Left cardiac atrium (tissue), 4 donors: ENCODE measurements at regions of chr1 and their contacts with region 1.

Region 1: DNA sequence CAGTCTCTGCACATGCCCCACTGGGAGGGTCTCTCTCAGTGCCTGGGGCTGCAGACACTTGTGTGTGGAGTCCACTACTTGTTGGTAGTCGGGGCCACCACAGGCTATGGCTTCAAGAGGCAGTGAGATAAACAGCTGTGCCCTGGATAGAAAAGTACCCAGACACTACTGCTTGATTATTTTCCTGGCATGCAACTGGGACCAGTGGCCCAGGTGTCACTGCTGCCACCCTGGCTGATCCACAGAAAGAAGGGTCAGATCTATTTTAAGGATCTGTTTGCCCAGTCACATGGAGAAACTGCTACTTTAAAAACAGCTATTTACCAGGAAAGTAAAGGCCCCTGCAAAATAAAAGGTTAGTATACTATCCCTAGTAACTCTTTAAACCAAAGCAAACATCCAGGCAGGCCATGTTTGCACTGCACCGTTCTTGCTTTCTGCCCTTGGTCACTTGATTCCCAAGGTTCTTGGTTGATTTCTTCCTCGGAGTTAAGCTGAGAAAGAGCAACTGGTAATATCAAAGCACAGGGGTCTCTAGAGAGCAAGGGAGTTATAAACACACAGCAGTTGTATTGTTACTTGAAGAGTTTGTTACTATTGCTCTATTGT is 99.9 kb downstream of the GLUL start:
- DNase-seq: no peak
- ATAC-seq: peak; percentile 50 to 55

Region 2: GRCh38 chr1:182229921-182230491 is 61.7 kb before region 1 on chr1:
- intact Hi-C with region 1: loop called in 1 of 2 experiments (anchors 5 kb)
- DNase-seq: no peak
- ATAC-seq: peak; percentile 85 to 91

Region 3: GRCh38 chr1:182391362-182392044 is 99.8 kb after region 1 on chr1 and contains the start of gene GLUL:
- intact Hi-C with region 1: loop called in 1 of 2 experiments (anchors 5 kb)
- DNase-seq: peak; percentile 93
- ATAC-seq: peak; percentile 93 to 95
- total RNA-seq, gene GLUL: 462 to 760 TPM